ENCODE measurements at regions of chr7 and their contacts with region 1.

Region 1: GRCh38 chr7:150994141-150994964 is 3.5 kb downstream of the NOS3 start:
- DNase-seq: no peak
- ATAC-seq: peak; percentile 68
- H3K4me3 Mint-ChIP-seq: no peak overlapping the region
- H3K27ac Mint-ChIP-seq: no peak overlapping the region
- H3K4me1 Mint-ChIP-seq: peaks cover 2% of the 10 kb centered on the region
- H3K27me3 Mint-ChIP-seq: peaks cover 10% of the 10 kb centered on the region

Region 2: DNA sequence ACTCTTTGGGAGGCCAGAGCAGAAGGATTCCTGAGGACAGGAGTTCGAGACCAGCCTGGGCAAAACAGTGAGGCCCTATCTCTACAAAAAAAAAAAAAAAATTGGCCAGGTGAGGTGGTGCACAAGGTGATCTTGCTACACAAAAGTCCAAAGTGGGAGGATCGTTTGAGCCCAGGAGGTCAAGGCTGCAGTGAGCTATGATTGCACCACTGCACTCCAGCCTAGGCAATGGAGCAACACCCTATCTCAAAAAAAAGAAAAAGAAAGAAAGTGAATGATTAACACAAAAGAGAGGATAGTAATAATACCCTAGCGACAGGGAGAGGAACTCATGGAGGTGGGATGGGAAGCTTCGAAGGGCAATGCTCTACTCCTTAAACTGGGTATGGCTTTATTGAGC is 224.6 kb before region 1 on chr7:
- CTCF ChIA-PET with region 1: no interaction called
- DNase-seq: no peak
- ATAC-seq: no peak
- H3K4me3 Mint-ChIP-seq: no peak overlapping the region
- H3K27ac Mint-ChIP-seq: no peak overlapping the region
- H3K4me1 Mint-ChIP-seq: no peaks in the 10 kb centered on the region
- H3K27me3 Mint-ChIP-seq: peaks cover 11% of the 10 kb centered on the region

Region 3: GRCh38 chr7:150968734-150969372 is 25.5 kb before region 1 on chr7:
- CTCF ChIA-PET with region 1: no interaction called
- DNase-seq: no peak
- ATAC-seq: no peak
- H3K4me3 Mint-ChIP-seq: no peak overlapping the region
- H3K27ac Mint-ChIP-seq: no peak overlapping the region
- H3K4me1 Mint-ChIP-seq: no peaks in the 10 kb centered on the region
- H3K27me3 Mint-ChIP-seq: peaks cover 22% of the 10 kb centered on the region

Region 4: GRCh38 chr7:151008511-151009323 is 14.4 kb after region 1 on chr7:
- CTCF ChIA-PET with region 1: interaction called, 19 read pairs
- DNase-seq: peak; percentile 89
- ATAC-seq: peak; percentile 73
- H3K4me3 Mint-ChIP-seq: peak overlapping the region; percentile 81
- H3K27ac Mint-ChIP-seq: peak overlapping the region; percentile 90
- H3K4me1 Mint-ChIP-seq: peaks cover 48% of the 10 kb centered on the region
- H3K27me3 Mint-ChIP-seq: no peaks in the 10 kb centered on the region

Measured in activated CD8-positive, alpha-beta memory T cell treated with anti-CD3 and anti-CD28 coated beads, Interleukin-2, amount 10 ng/mL, durations not matched to agents 7 days and 5 days (primary cell).